Activated CD4-positive, alpha-beta T cell treated with anti-CD3 and anti-CD28 coated beads for 36 hours (primary cell): ENCODE measurements at regions of chr16 and their contacts with region 1.

Region 1: GRCh38 chr16:31142109-31143010 is 6.8 kb upstream of the PRSS8 start:
- DNase-seq: peak; percentile 100
- ATAC-seq: peak; percentile 96
- H3K4me3 Mint-ChIP-seq: peak overlapping the region; percentile 62
- H3K27ac Mint-ChIP-seq: peak overlapping the region; percentile 80
- H3K4me1 Mint-ChIP-seq: peaks cover 12% of the 10 kb centered on the region
- H3K27me3 Mint-ChIP-seq: no peaks in the 10 kb centered on the region

Region 2: DNA sequence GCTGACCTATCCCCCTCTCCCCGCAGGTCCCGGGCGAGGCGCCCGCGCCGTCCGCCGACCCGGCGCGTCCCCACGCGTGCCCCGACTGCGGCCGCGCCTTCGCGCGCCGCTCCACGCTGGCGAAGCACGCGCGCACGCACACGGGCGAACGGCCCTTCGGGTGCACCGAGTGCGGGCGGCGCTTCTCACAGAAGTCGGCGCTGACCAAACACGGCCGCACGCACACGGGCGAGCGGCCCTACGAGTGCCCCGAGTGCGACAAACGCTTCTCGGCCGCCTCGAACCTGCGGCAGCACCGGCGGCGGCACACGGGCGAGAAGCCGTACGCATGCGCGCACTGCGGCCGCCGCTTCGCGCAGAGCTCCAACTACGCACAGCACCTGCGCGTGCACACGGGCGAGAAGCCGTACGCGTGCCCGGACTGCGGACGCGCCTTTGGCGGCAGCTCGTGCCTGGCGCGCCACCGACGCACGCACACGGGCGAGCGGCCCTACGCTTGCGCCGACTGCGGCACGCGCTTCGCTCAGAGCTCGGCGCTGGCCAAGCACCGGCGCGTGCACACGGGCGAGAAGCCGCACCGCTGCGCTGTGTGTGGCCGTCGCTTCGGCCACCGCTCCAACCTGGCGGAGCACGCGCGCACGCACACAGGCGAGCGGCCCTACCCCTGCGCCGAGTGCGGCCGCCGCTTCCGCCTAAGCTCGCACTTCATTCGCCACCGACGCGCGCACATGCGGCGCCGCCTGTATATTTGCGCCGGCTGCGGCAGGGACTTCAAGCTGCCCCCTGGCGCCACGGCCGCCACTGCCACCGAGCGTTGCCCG is 724.6 kb before region 1 on chr16:
- CTCF ChIA-PET with region 1: no interaction called
- POLR2A ChIA-PET with region 1: no interaction called
- intact Hi-C with region 1: no loop called
- DNase-seq: peak; percentile 94
- ATAC-seq: peak; percentile 92
- H3K4me3 Mint-ChIP-seq: peak overlapping the region; percentile 49
- H3K27ac Mint-ChIP-seq: no peak overlapping the region
- H3K4me1 Mint-ChIP-seq: peaks cover 31% of the 10 kb centered on the region
- H3K27me3 Mint-ChIP-seq: no peaks in the 10 kb centered on the region

Region 3: GRCh38 chr16:30984669-30985400 is 157.5 kb before region 1 on chr16 and contains the start of gene HSD3B7:
- CTCF ChIA-PET with region 1: interaction called, 35 read pairs
- POLR2A ChIA-PET with region 1: interaction called, 3 read pairs
- intact Hi-C with region 1: loop called (anchors 1 to 10 kb)
- DNase-seq: peak; percentile 91
- ATAC-seq: peak; percentile 92
- H3K4me3 Mint-ChIP-seq: no peak within 1 kb of the TSS
- H3K27ac Mint-ChIP-seq: peak within 1 kb of the TSS; percentile 31
- H3K4me1 Mint-ChIP-seq: peaks cover 3% of the 10 kb centered on the region
- H3K27me3 Mint-ChIP-seq: no peaks in the 10 kb centered on the region
- total RNA-seq, gene HSD3B7: 1.6 to 2.2 TPM

Region 4: GRCh38 chr16:31032736-31033708 is 109.3 kb before region 1 on chr16 and contains the start of gene STX4:
- CTCF ChIA-PET with region 1: interaction called, 4 read pairs
- POLR2A ChIA-PET with region 1: no interaction called
- intact Hi-C with region 1: loop called in 1 of 2 experiments (anchors 1 kb)
- DNase-seq: peak; percentile 99
- ATAC-seq: peak; percentile 89
- H3K4me3 Mint-ChIP-seq: peak within 1 kb of the TSS; percentile 96
- H3K27ac Mint-ChIP-seq: peak within 1 kb of the TSS; percentile 93
- H3K4me1 Mint-ChIP-seq: peaks cover 15% of the 10 kb centered on the region
- H3K27me3 Mint-ChIP-seq: no peaks in the 10 kb centered on the region
- total RNA-seq, gene STX4: 29.2 to 35.9 TPM

Region 5: DNA sequence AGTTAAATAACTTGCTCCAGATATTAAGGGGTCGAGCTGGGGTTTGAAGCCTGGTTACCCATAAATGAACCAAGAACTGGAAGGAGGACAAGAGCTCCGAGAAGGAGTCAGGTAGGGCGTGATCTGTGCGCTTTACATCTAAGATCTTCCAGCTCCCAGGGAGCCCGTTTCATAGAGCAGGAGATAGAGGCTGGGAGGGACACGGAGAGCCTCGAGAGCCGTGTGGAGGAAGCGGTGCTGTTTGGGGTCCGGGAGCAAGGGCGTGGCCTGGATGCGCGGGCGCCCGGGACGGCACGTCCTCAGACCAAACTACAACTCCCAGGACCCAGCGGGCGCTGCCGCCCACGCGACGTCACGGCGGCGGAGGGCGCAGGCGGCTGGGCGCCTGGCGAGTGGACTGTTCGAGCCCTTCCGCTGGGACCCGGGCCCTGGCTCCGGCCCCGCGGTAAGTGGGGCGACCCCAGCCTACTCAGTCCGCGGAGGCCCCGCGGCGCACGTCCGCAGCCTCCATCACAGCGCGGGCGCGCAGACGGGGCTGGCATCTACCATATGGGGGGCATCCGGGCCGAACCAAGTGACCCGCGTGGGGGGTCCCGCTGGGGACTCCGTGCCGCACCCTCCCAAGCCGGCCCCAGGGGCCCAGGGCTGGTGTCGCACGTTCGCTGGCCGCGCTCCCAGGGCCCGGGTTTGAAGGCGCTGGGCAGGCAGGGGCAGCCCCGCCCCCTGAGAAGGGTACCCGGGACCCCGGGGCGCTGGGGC is 34.1 kb before region 1 on chr16 and contains the start of gene BCKDK:
- CTCF ChIA-PET with region 1: interaction called, 3 read pairs
- POLR2A ChIA-PET with region 1: no interaction called
- intact Hi-C with region 1: loop called (anchors 2 to 5 kb)
- DNase-seq: peak; percentile 90
- ATAC-seq: peak; percentile 79
- H3K4me3 Mint-ChIP-seq: peak within 1 kb of the TSS; percentile 86
- H3K27ac Mint-ChIP-seq: peak within 1 kb of the TSS; percentile 96
- H3K4me1 Mint-ChIP-seq: peaks cover 22% of the 10 kb centered on the region
- H3K27me3 Mint-ChIP-seq: no peaks in the 10 kb centered on the region
- total RNA-seq, gene BCKDK: 50.0 to 53.3 TPM

Region 6: DNA sequence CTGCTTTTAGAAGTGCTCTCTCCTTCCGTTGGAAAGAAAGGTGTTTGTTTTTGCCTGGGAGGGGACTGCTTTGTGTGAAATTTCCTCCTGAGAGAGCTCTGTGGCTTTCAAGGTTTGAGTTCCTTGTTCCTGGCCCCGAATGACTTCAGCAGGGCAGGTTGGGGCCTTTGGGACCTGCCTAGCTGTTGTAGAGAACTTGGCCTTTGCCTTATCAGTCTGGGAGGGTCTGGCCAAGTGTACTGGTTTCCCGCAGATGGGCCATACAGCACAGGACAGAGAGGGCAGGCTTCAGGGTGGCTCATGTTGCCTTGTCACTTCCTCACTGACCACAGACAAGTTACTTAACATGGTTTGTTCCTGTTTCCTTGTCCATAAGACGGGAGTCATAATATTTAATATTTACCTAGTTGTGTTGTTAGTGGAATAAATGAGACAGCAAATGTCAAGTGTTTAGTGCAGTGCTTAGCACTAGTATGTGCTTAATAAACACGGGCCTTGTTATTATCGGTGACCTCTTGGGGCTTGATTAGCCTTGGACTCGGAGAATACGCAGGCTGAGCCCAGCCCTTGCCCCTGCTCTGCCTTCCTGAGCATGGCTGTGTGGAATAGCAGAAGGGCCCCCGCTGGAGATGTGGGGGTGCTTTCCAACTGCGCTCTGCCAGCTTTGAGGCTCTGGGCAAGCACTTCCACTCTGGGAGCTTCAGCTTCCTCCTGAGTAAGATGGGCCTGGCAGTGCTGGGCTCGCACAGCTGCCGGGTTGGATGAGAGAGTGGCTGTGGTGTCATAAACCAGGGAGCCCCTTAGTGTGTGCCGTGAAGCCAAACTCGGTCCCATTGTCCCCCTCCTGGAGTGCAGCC is 13.4 kb before region 1 on chr16:
- CTCF ChIA-PET with region 1: interaction called, 10 read pairs
- POLR2A ChIA-PET with region 1: interaction called, 6 read pairs
- intact Hi-C with region 1: no loop called
- DNase-seq: no peak
- ATAC-seq: no peak
- H3K4me3 Mint-ChIP-seq: no peak overlapping the region
- H3K27ac Mint-ChIP-seq: peak overlapping the region; percentile 2
- H3K4me1 Mint-ChIP-seq: no peaks in the 10 kb centered on the region
- H3K27me3 Mint-ChIP-seq: no peaks in the 10 kb centered on the region

Region 7: GRCh38 chr16:31179747-31180459 is 37.5 kb after region 1 on chr16 and contains the start of gene FUS:
- CTCF ChIA-PET with region 1: interaction called, 23 read pairs
- POLR2A ChIA-PET with region 1: interaction called, 38 read pairs
- intact Hi-C with region 1: loop called (anchors 1 kb)
- DNase-seq: peak; percentile 94
- ATAC-seq: peak; percentile 56
- H3K4me3 Mint-ChIP-seq: peak within 1 kb of the TSS; percentile 95
- H3K27ac Mint-ChIP-seq: peak within 1 kb of the TSS; percentile 99
- H3K4me1 Mint-ChIP-seq: peaks cover 51% of the 10 kb centered on the region
- H3K27me3 Mint-ChIP-seq: no peaks in the 10 kb centered on the region
- total RNA-seq, gene FUS: 647 to 648 TPM

Region 8: DNA sequence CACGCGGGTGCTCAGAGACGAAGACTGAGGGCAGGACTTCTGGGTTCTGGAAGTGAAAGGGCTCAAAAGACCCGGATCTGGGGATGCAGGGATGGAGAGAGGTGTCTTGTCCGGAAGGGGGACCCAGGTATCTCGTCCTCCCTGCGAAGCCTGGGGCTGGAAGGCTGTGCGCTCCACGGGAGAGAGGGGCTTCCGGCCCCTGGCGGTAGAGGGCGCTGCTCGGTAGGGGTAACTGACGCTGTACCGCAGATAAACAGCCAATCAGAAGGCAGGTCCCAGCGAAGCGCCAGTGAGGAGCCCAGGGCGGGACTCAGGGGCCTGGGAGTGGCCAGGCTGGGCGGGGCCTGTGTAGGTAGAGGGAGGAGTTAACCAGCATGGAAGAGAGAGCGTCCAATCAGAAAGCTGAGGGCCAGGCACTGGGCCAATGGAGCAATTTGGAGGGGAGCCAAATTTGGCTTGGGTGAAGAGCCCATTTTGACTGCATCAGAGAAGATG is 330.4 kb after region 1 on chr16:
- CTCF ChIA-PET with region 1: no interaction called
- POLR2A ChIA-PET with region 1: no interaction called
- intact Hi-C with region 1: loop called in 1 of 2 experiments (anchors 1 kb)
- DNase-seq: peak; percentile 74
- ATAC-seq: peak; percentile 54
- H3K4me3 Mint-ChIP-seq: peak overlapping the region; percentile 54
- H3K27ac Mint-ChIP-seq: no peak overlapping the region
- H3K4me1 Mint-ChIP-seq: peaks cover 22% of the 10 kb centered on the region
- H3K27me3 Mint-ChIP-seq: peaks cover 18% of the 10 kb centered on the region